Head of caudate nucleus (tissue), 42 donors: ENCODE measurements at regions of chr1 and their contacts with region 1.

Region 1: DNA sequence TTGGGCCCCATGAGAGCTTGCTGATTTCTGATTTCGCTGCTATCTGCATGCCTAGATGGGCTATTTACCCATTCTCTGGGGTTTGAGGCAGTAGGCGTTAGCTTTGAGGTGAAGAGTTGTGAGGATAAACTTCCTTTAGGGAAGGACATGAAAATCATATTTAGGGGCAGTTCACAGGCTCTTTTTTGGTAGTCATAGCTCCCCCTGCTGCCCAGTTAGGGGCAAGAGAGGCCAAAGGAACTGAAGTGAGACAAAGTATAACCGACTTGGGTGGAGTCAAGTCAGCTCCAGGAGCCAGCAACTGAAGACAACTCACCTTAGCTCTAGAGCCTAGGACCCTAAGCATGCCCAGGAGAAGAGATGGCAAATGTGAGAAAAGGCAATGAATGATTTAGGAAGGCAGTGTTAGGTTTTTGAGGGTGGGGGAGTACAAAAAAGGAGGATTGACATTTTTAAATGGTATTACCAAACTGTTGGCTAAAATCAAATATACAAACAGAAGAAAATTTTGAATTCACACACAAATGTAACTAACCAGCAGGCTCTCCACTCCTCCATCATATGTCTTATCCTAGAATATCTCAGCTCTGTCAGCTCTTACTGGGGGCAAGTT is 625.2 kb downstream of the LMO4 start:
- DNase-seq: peak; percentile 29 to 88 (median 66)

Region 2: GRCh38 chr1:87292684-87293493 is 660.9 kb before region 1 on chr1:
- intact Hi-C with region 1: loop called (anchors 10 kb)
- DNase-seq: peak in 38 of 42 donors; percentile 19 to 92 (median 71)

Region 3: DNA sequence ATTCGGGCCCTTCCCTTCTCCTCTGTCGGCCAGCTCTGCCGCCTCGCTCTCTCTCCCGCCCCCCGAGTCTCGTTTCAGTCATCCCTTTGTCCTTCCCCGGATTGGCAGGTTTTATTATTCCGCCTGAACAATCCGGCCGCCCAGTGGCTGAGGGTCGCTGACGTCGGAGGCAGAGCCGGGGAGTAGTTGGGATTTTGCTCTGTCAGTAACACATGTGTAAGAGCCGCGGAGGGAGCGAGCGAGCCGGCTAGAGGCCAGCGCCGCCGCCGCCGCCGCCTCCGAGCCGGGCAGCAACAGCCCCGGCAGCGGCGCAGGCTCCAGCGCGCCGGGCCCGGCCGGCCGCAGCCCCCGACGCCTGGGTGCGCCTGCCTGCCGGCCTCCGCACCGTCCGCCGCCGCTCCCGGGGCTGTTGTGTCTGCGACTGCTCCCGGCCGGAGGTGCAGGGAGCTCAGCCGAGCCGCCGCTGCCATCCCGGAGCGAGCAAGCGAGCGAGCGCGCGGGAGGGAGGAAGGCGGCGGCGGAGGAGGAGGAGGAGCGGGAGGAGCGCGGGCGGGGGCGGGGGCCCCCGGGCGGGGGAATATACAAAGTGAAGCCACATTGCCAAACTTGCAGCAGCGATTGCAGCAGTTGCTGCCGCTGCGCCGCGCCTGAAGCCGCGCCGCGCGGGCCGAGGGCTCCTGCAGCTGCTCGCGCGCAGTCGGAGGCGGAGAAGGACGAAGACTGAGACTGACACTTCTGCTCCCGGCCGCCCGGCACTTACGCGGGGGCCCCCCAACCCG is 625.4 kb before region 1 on chr1 and contains the start of gene LMO4:
- intact Hi-C with region 1: loop called (anchors 10 kb)
- DNase-seq: peak; percentile 92 to 99 (median 97)

Region 4: GRCh38 chr1:87853576-87854351 is 100.1 kb before region 1 on chr1:
- intact Hi-C with region 1: no loop called
- DNase-seq: no peak